A549 (cell line): ENCODE measurements at regions of chr22 and their contacts with region 1.

Region 1: GRCh38 chr22:24768537-24769374 is 5.8 kb downstream of the PIWIL3 start:
- DNase-seq: peak; percentile 61 to 68
- ATAC-seq: peak; percentile 91 to 95
- H3K4me3 ChIP-seq: no peak overlapping the region
- H3K27ac ChIP-seq: no peak overlapping the region
- H3K4me1 ChIP-seq: no peaks in the 10 kb centered on the region
- CTCF ChIP-seq: peak; percentile 58
- EP300 ChIP-seq: no peak
- POLR2A ChIP-seq: no peak
- RAD21 ChIP-seq: peak; percentile 76

Region 2: DNA sequence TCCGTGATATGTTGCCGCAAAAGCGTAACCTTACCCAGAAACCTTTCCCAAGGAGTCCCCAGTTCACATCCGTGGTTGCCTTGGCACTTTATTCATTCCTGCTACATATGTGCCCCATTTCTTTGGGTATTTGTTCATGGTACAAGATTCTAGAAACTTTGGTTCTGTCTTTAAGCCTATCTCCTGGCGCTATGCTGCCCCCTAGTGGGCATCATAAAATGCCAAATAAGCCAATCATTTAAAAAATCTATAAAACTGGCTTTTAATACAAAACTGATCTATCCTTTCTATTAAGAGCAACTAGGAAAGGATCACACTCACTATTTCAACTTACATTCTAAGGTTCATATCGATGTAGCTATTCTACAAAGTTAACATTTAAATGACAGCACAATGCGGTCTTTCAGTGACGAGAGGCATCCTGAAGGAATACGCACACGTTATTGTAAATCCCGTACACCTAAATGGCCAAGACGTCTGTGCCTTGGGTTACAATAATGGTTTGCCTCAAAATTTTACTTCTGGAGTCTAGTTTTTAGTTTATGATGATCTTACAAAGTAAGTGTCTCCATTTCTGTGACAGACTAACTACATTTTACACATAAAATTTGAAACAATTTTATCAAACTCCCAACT is 10.5 kb before region 1 on chr22:
- CTCF ChIA-PET with region 1: interaction called, 20 read pairs
- POLR2A ChIA-PET with region 1: no interaction called
- DNase-seq: peak; percentile 14 to 40
- ATAC-seq: peak in 1 of 2 experiments; percentile 35; a peak in 1 of 6 replicates
- H3K4me3 ChIP-seq: no peak overlapping the region
- H3K27ac ChIP-seq: no peak overlapping the region
- H3K4me1 ChIP-seq: no peaks in the 10 kb centered on the region
- CTCF ChIP-seq: peak; percentile 82
- EP300 ChIP-seq: no peak
- POLR2A ChIP-seq: no peak
- RAD21 ChIP-seq: peak; percentile 80 to 86

Region 3: GRCh38 chr22:24803011-24803542 is 34.3 kb after region 1 on chr22:
- CTCF ChIA-PET with region 1: interaction called, 14 read pairs
- POLR2A ChIA-PET with region 1: no interaction called
- DNase-seq: peak; percentile 53 to 61
- ATAC-seq: peak; percentile 63 to 76
- H3K4me3 ChIP-seq: no peak overlapping the region
- H3K27ac ChIP-seq: no peak overlapping the region
- H3K4me1 ChIP-seq: no peaks in the 10 kb centered on the region
- CTCF ChIP-seq: peak; percentile 71
- EP300 ChIP-seq: no peak
- POLR2A ChIP-seq: no peak
- RAD21 ChIP-seq: peak; percentile 21 to 24; a peak in 2 of 5 replicates

Region 4: GRCh38 chr22:24845041-24845898 is 76.5 kb after region 1 on chr22:
- CTCF ChIA-PET with region 1: interaction called, 44 read pairs
- POLR2A ChIA-PET with region 1: no interaction called
- DNase-seq: peak in 1 of 2 experiments; percentile 20
- ATAC-seq: peak; percentile 68 to 80; a peak in 5 of 6 replicates
- H3K4me3 ChIP-seq: no peak overlapping the region
- H3K27ac ChIP-seq: peak overlapping the region in 1 of 2 experiments; percentile 36; a peak in 1 of 6 replicates
- H3K4me1 ChIP-seq: peaks cover 8% of the 10 kb centered on the region; the same call in 1 of the 3 replicates
- CTCF ChIP-seq: no peak
- EP300 ChIP-seq: no peak
- POLR2A ChIP-seq: no peak
- RAD21 ChIP-seq: no peak

Region 5: DNA sequence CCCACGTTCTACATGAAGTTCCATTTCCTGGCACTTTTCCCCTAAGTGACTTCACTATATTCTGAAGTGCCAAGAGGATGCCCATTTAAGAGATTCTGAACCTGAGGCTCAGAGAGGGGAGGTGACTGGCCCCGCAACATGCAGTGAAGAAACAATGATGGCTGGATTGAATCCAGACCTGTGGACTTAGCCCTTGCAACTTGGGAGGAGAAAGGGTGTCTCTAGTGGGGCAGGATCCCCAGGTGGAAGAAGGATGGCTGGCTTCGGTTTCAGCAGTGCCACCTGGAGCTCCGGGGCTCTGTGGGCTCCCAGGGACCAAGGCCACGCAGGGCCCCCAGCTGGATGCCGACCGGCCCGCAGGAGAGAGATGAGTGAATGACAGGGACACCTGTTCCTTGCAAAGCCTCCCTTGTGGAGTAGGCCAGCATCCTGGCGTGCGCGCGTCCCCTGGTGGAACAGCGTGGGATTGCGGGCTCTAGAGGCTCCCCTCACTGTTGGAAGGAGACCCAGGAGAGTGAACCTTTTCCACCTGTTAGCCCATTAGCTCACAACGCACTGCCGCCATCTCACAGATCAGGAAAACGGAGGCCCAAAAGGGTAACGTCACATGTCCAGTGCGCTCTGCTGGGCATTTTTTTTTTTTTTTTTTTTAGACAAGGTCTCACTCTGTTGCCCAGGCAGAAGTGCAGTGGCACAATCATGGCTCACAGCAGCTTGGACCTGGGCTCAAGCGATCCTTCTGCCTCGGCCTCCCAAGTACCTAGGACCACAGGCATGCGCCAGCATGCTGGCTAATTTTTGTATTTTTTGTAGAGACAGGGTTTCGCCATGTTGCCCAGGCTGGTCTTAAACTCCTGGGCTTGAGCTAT is 288.5 kb after region 1 on chr22:
- CTCF ChIA-PET with region 1: interaction called, 16 read pairs
- POLR2A ChIA-PET with region 1: no interaction called
- DNase-seq: peak; percentile 44 to 56
- ATAC-seq: peak; percentile 96 to 98
- H3K4me3 ChIP-seq: no peak overlapping the region
- H3K27ac ChIP-seq: no peak overlapping the region
- H3K4me1 ChIP-seq: peaks cover 7% of the 10 kb centered on the region; the same call in 1 of the 3 replicates
- CTCF ChIP-seq: peak; percentile 65
- EP300 ChIP-seq: no peak
- POLR2A ChIP-seq: no peak
- RAD21 ChIP-seq: peak; percentile 69 to 77

Region 6: DNA sequence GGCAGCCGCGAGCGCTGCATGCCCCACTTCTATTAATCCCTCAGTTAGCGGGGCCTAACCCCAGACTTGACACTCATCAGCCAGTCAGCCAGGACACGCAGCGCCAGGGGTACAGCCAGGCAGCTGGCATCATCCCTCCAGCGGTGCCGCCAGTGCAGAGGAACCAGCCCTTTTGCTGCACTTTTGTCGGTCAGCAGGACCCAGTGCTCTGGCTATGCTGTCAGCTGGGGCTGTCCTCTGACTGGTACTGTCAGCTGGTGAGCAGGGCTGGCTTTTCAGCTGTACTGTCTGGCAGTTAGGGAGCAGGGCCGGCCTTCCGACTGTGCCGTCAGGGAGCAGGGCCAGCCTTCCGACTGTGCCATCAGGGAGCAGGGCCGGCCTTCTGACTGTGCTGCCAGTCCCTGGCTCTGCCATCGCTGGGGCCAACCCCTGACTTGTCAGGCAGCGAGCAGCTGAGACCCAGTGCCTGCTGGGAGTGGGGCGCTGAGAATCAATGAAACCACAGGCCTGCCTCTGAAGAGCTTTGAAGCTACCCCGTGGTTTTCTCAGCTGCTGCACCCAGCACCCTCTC is 299.2 kb after region 1 on chr22:
- CTCF ChIA-PET with region 1: no interaction called
- POLR2A ChIA-PET with region 1: no interaction called
- DNase-seq: no peak
- ATAC-seq: no peak
- H3K4me3 ChIP-seq: no peak overlapping the region
- H3K27ac ChIP-seq: no peak overlapping the region
- H3K4me1 ChIP-seq: no peaks in the 10 kb centered on the region
- CTCF ChIP-seq: no peak
- EP300 ChIP-seq: no peak
- POLR2A ChIP-seq: no peak
- RAD21 ChIP-seq: no peak

Region 7: GRCh38 chr22:25219948-25220442 is 451.2 kb after region 1 on chr22:
- CTCF ChIA-PET with region 1: no interaction called
- POLR2A ChIA-PET with region 1: no interaction called
- DNase-seq: no peak
- ATAC-seq: no peak
- H3K4me3 ChIP-seq: no peak overlapping the region
- H3K27ac ChIP-seq: no peak overlapping the region
- H3K4me1 ChIP-seq: no peaks in the 10 kb centered on the region
- CTCF ChIP-seq: no peak
- EP300 ChIP-seq: no peak
- POLR2A ChIP-seq: no peak
- RAD21 ChIP-seq: no peak